ENCODE measurements at regions of chr3 and their contacts with region 1.

Region 1: DNA sequence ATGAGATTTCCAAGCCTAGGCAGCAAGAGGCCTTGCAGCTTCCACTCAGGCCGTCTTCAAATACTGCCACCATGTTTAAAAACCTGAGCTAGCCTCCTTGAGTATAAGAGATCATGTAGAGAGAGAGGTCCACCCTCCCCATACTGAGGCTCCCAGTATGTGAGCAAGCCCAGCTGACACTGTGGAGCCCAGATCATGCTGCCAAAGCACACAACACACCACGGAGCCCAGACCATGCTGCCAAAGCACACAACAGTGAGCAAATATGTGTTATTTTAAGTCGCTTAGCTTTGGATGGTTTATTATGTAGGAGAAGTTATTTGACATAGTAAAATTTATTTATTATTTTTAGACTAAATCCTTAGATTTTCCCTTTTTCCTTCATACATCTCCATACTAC is 333.7 kb downstream of the CTNNB1 start:
- DNase-seq: no peak
- H3K4me3 ChIP-seq: no peak overlapping the region
- H3K27ac ChIP-seq: no peak overlapping the region
- H3K4me1 ChIP-seq: no peaks in the 10 kb centered on the region
- H3K27me3 ChIP-seq: no peaks in the 10 kb centered on the region
- CTCF ChIP-seq: no peak

Region 2: GRCh38 chr3:41508063-41508696 is 24.8 kb before region 1 on chr3:
- CTCF ChIA-PET with region 1: interaction called, 9 read pairs
- POLR2A ChIA-PET with region 1: interaction called, 14 read pairs
- intact Hi-C with region 1: no loop called
- DNase-seq: peak in 1 of 2 experiments; percentile 77
- H3K4me3 ChIP-seq: no peak overlapping the region
- H3K27ac ChIP-seq: no peak overlapping the region
- H3K4me1 ChIP-seq: no peaks in the 10 kb centered on the region
- H3K27me3 ChIP-seq: no peaks in the 10 kb centered on the region
- CTCF ChIP-seq: no peak